Activated naive CD4-positive, alpha-beta T cell treated with anti-CD3 and anti-CD28 coated beads, Interleukin-2, amount 10 ng/mL, durations not matched to agents 7 days and 5 days (primary cell): ENCODE measurements at regions of chr5 and their contacts with region 1.

Region 1: GRCh38 chr5:170225326-170226128 is 7.3 kb upstream of the C5orf58 start:
- DNase-seq: peak; percentile 87
- H3K4me3 Mint-ChIP-seq: no peak overlapping the region
- H3K27ac Mint-ChIP-seq: no peak overlapping the region
- H3K4me1 Mint-ChIP-seq: peaks cover 4% of the 10 kb centered on the region
- H3K27me3 Mint-ChIP-seq: peaks cover 4% of the 10 kb centered on the region

Region 2: DNA sequence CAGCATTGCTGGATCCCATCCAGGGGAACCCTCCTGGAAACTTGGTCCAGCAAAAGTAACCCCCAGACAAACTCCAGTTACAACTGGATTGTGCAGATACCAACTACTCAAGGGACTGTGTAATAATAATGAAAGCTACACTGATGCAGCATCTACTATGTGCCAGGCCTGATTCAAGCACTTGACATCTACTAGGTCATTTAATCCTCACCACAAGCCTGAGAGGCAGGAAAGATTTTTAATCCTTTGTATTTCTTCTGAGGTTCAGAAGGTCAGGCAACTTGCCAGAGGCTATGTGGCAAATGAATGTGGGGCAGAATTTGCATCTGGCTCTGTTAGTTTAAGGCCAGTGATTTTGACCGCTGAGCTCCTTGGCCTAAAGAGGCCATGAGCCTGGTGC is 149.3 kb before region 1 on chr5:
- CTCF ChIA-PET with region 1: no interaction called
- DNase-seq: no peak
- H3K4me3 Mint-ChIP-seq: no peak overlapping the region
- H3K27ac Mint-ChIP-seq: no peak overlapping the region
- H3K4me1 Mint-ChIP-seq: no peaks in the 10 kb centered on the region
- H3K27me3 Mint-ChIP-seq: no peaks in the 10 kb centered on the region

Region 3: DNA sequence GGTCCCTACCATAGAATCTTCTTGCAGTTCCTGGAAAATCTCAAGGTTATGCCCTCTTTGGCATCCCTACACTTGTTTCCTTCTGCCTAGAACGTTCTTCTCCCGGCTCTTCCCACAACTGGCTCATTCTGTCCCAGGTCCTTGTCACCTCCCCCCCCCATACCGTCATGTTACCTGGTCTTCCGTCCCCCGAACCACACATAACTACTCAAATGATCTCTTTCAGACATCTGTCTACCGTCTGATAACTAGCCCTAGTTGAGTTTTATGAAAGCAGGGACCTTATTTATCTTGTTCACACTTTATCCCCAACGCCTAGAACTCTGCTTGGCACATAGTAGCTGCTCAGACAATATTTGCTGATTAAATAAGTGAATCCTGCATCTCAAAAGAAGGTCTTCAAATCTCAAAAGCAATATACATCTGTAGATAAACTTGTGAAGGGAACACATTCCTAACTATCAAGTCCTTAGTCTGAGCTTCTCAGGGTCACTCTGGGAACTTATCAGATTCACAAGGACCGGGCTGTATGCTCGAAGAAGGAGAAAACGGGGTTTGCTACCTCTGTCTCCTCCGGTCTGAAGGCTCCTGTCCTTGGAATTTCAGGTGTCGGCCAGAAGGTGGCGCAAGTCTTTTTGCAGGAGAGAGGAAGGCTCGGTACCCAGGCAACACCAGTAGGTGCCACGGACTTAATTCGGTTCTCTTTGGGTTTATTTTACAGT is 42.1 kb after region 1 on chr5:
- CTCF ChIA-PET with region 1: interaction called, 40 read pairs
- DNase-seq: peak; percentile 87
- H3K4me3 Mint-ChIP-seq: peak overlapping the region; percentile 40
- H3K27ac Mint-ChIP-seq: peak overlapping the region; percentile 87
- H3K4me1 Mint-ChIP-seq: peaks cover 92% of the 10 kb centered on the region
- H3K27me3 Mint-ChIP-seq: no peaks in the 10 kb centered on the region

Region 4: DNA sequence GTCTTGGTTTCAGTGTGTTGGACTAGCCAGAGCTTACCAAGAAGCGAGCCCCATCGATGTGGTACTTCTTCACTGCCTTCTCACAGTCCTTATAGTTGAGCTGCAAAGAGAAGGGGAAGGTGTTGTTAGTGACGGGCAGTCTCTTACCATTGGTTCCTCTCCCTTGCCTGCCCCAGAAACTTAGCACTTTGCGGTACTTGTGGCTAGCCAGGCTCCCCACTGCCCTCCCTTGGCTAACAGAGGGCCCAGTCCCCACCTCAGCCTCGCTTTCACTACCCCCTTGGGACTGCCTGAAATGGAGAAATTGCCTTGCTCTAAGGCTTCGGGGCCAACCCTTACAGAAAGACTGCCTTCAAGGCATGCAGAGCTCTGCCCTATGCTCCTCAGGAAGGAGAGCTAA is 67.7 kb after region 1 on chr5:
- CTCF ChIA-PET with region 1: interaction called, 12 read pairs
- DNase-seq: peak; percentile 68
- H3K4me3 Mint-ChIP-seq: peak overlapping the region; percentile 100
- H3K27ac Mint-ChIP-seq: peak overlapping the region; percentile 79
- H3K4me1 Mint-ChIP-seq: peaks cover 70% of the 10 kb centered on the region
- H3K27me3 Mint-ChIP-seq: no peaks in the 10 kb centered on the region

Region 5: GRCh38 chr5:170338933-170339779 is 113.6 kb after region 1 on chr5:
- CTCF ChIA-PET with region 1: interaction called, 218 read pairs
- DNase-seq: peak; percentile 79
- H3K4me3 Mint-ChIP-seq: no peak overlapping the region
- H3K27ac Mint-ChIP-seq: no peak overlapping the region
- H3K4me1 Mint-ChIP-seq: peaks cover 38% of the 10 kb centered on the region
- H3K27me3 Mint-ChIP-seq: peaks cover 5% of the 10 kb centered on the region

Region 6: GRCh38 chr5:170420780-170421412 is 195.4 kb after region 1 on chr5:
- CTCF ChIA-PET with region 1: interaction called, 92 read pairs
- DNase-seq: peak; percentile 65
- H3K4me3 Mint-ChIP-seq: no peak overlapping the region
- H3K27ac Mint-ChIP-seq: no peak overlapping the region
- H3K4me1 Mint-ChIP-seq: peaks cover 15% of the 10 kb centered on the region
- H3K27me3 Mint-ChIP-seq: peaks cover 35% of the 10 kb centered on the region